ENCODE measurements at regions of chr13 and their contacts with region 1.

Region 1: DNA sequence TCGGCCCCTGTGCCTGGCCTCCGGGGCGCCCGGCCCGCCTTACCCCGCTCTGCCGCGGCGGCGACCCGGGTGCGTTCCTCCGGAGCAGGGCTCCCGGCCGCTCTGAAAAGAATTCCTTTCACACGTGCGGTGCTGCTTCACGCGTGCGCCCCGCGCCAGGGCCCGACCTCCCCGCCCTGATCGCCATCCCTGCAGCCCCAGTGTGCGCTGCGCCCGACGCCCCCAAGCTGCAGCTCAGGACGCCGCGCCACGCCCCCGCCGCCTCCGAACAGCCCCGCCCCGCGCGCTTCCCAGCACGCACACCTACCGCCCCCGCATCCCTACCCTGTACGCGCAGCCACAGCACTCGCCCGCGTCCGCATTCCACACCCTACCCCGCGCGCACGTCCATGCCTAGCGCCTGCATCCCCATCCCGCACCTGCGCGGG is at the start of gene GJA3:
- DNase-seq: peak in 1 of 2 donors; percentile 24
- H3K4me3 ChIP-seq: peak within 1 kb of the TSS in 1 of 3 donors; percentile 32
- H3K27ac ChIP-seq: no peak within 1 kb of the TSS
- H3K4me1 ChIP-seq: peaks cover 6 to 20% of the 10 kb centered on the region in 2 donors
- H3K27me3 ChIP-seq: peaks cover 43% of the 10 kb centered on the region
- CTCF ChIP-seq: no peak
- POLR2A ChIP-seq: no peak
- total RNA-seq, gene GJA3: 0.11 to 0.54 (median 0.41) TPM

Region 2: GRCh38 chr13:19927117-19927748 is 233.6 kb before region 1 on chr13:
- intact Hi-C with region 1: loop called (anchors 10 kb)
- DNase-seq: no peak
- H3K4me3 ChIP-seq: no peak overlapping the region
- H3K27ac ChIP-seq: no peak overlapping the region
- H3K4me1 ChIP-seq: no peaks in the 10 kb centered on the region
- H3K27me3 ChIP-seq: no peaks in the 10 kb centered on the region
- CTCF ChIP-seq: peak; percentile 44 to 74 (median 59)
- POLR2A ChIP-seq: no peak

Region 3: GRCh38 chr13:20369886-20370361 is 209.1 kb after region 1 on chr13:
- intact Hi-C with region 1: no loop called
- DNase-seq: peak; percentile 44 to 60
- H3K4me3 ChIP-seq: no peak overlapping the region
- H3K27ac ChIP-seq: peak overlapping the region in 2 of 3 donors; percentile 33 to 62
- H3K4me1 ChIP-seq: peaks cover 16 to 18% of the 10 kb centered on the region in 2 donors
- H3K27me3 ChIP-seq: no peaks in the 10 kb centered on the region
- CTCF ChIP-seq: no peak
- POLR2A ChIP-seq: no peak